Activated B cell treated with CpG ODN at 0.5 μM for 24 hours (primary cell): ENCODE measurements at regions of chr3 and their contacts with region 1.

Region 1: GRCh38 chr3:5122030-5122740 is at the start of gene ARL8B:
- DNase-seq: peak; percentile 93
- ATAC-seq: peak; percentile 95
- H3K4me3 Mint-ChIP-seq: peak within 1 kb of the TSS; percentile 94
- H3K27ac Mint-ChIP-seq: peak within 1 kb of the TSS; percentile 91
- H3K4me1 Mint-ChIP-seq: peaks cover 43% of the 10 kb centered on the region
- H3K27me3 Mint-ChIP-seq: no peaks in the 10 kb centered on the region
- CTCF ChIP-seq: peak; percentile 82
- total RNA-seq, gene ARL8B: 57.9 and 62.6 TPM in 2 replicates

Region 2: GRCh38 chr3:3126477-3127431 is 1995.4 kb before region 1 on chr3 and contains the start of gene TRNT1:
- CTCF ChIA-PET with region 1: no interaction called
- POLR2A ChIA-PET with region 1: no interaction called
- intact Hi-C with region 1: loop called (anchors 10 kb)
- DNase-seq: peak; percentile 94
- ATAC-seq: peak; percentile 96
- H3K4me3 Mint-ChIP-seq: peak within 1 kb of the TSS; percentile 96
- H3K27ac Mint-ChIP-seq: peak within 1 kb of the TSS; percentile 93
- H3K4me1 Mint-ChIP-seq: peaks cover 28% of the 10 kb centered on the region
- H3K27me3 Mint-ChIP-seq: no peaks in the 10 kb centered on the region
- CTCF ChIP-seq: no peak
- total RNA-seq, gene TRNT1: 40.1 and 51.3 TPM in 2 replicates

Region 3: GRCh38 chr3:4303187-4304123 is 818.7 kb before region 1 on chr3 and contains the start of gene SETMAR:
- CTCF ChIA-PET with region 1: no interaction called
- POLR2A ChIA-PET with region 1: no interaction called
- intact Hi-C with region 1: loop called (anchors 1 kb)
- DNase-seq: peak; percentile 77
- ATAC-seq: peak; percentile 96
- H3K4me3 Mint-ChIP-seq: peak within 1 kb of the TSS; percentile 98
- H3K27ac Mint-ChIP-seq: peak within 1 kb of the TSS; percentile 98
- H3K4me1 Mint-ChIP-seq: peaks cover 11% of the 10 kb centered on the region
- H3K27me3 Mint-ChIP-seq: no peaks in the 10 kb centered on the region
- CTCF ChIP-seq: no peak
- total RNA-seq, gene SETMAR: 10.3 and 11.4 TPM in 2 replicates

Region 4: DNA sequence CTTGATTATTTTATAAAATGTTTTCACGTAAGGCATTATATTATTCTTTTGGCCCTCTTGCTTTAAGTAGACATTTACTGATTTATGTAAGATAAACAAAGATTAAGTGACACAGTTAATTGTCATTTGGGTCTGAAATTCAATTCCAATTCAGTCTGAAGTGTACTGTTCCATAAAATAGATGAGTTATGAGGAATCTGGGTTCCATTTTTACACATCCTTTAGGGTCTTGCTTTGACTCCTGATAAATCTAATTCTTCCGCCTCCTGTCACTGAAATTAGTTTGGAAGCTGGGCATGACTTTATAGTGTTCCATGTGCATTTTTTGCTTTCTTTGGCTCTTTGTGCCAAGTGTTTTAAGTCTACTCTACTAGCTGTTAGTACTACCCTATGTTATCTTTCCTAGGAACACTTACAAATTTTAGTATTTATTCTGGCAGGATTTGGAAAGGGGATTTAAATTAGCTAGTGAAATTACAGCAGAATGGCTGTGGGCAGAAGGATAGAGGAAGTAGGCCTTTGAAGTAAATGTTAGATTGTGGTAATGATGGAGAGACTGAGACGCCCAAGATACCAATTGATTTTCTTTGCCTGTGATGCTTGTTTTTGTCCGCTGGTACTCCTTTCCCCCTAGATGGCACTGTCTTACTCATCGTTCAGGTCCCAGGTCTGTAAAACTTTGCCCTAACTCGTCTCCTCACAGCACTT is 14.2 kb after region 1 on chr3:
- CTCF ChIA-PET with region 1: interaction called, 5 read pairs
- POLR2A ChIA-PET with region 1: interaction called, 6 read pairs
- intact Hi-C with region 1: loop called (anchors 1 kb)
- DNase-seq: no peak
- ATAC-seq: peak; percentile 70
- H3K4me3 Mint-ChIP-seq: peak overlapping the region; percentile 40
- H3K27ac Mint-ChIP-seq: peak overlapping the region; percentile 83
- H3K4me1 Mint-ChIP-seq: peaks cover 74% of the 10 kb centered on the region
- H3K27me3 Mint-ChIP-seq: no peaks in the 10 kb centered on the region
- CTCF ChIP-seq: peak; percentile 29

Region 5: DNA sequence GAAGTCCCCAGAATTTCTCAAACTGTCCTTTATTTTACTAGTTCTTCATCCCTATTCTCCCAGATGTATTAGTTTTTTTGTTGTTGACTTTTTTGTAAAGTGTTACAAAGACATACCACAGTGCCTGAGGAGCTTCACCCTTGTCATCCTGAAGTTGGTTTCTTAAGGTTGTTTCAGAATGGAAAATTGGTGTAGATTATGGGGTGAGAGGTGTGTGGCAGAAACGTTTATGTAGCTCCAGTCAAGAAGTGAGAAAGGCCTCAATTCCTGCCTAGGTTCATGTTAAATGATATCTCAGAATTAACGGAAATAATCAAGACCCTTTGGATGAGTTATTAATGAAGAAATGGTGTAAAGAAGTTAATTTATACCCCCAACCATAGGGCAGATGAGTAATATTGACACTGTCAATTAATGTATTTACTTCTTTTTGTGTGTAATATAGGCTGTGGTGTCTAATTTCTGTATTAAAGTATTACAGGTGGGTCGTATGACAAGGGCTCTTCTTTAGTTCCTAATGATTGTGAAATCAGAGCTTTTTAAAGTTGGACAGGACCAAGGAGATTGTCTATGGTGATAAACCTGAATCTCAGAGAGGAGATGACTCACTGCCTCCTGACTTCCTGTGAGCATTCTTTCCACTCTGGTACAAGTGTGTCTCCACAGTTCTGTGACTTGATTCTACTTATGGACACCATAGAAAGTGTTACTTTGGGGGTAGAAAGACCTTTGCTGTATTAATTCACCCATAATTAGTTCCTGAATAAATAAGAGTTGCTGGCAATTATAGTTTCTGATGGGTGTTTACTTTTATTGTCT is 72.4 kb after region 1 on chr3:
- CTCF ChIA-PET with region 1: interaction called, 3 read pairs
- POLR2A ChIA-PET with region 1: interaction called, 28 read pairs
- intact Hi-C with region 1: loop called (anchors 1 kb)
- DNase-seq: no peak
- ATAC-seq: peak; percentile 55
- H3K4me3 Mint-ChIP-seq: peak overlapping the region; percentile 62
- H3K27ac Mint-ChIP-seq: peak overlapping the region; percentile 89
- H3K4me1 Mint-ChIP-seq: peaks cover 94% of the 10 kb centered on the region
- H3K27me3 Mint-ChIP-seq: no peaks in the 10 kb centered on the region
- CTCF ChIP-seq: no peak

Region 6: GRCh38 chr3:5304789-5305683 is 182.9 kb after region 1 on chr3:
- CTCF ChIA-PET with region 1: no interaction called
- POLR2A ChIA-PET with region 1: no interaction called
- intact Hi-C with region 1: loop called (anchors 2 kb)
- DNase-seq: no peak
- ATAC-seq: peak; percentile 18
- H3K4me3 Mint-ChIP-seq: no peak overlapping the region
- H3K27ac Mint-ChIP-seq: no peak overlapping the region
- H3K4me1 Mint-ChIP-seq: peaks cover 4% of the 10 kb centered on the region
- H3K27me3 Mint-ChIP-seq: peaks cover 2% of the 10 kb centered on the region
- CTCF ChIP-seq: no peak